ENCODE measurements at regions of chr7 and their contacts with region 1.

Region 1: DNA sequence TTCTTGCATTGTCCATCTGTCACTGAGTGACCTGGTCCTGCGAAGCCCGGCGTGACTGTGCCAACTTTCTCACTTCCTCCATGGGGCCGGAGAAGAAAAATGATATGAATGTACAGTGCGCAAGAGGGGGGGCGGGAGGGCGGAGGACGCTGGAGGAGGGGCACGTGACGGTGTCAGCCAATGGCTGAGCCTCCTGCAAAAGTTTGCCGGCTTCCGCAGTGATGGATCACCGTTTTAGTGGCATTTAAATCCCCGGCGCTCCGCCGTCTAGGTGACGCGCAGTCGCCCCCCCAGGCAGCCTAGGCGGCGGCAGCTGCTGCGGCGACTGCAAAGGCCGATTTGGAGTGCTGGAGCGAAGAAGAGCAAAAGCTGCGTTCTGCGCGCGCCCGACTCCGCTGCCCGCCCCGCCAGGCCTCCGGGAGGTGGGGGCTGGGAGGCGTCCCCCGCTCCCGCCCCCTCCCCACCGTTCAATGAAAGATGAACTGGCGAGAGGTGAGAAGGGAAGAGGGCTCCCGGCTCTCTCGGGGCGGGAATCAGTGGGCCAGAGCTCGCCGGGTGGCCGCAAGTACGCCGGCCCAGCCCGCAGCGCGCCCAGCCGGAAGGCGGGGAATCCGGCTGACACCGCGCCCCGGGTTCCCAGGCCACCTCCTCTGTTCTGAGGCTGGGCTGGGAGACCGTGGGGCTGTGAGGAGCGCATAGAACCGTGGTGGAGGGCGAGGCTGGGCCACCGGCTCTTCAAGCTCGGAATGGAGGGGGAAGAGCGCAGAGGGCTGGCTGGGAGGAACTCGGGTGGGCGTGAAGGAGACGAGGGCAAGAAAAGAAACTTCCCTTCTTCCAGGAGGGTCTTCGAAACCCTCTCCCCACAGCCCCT is at the start of gene HOXA1:
- DNase-seq: peak; percentile 67
- ATAC-seq: peak; percentile 87
- H3K4me3 Mint-ChIP-seq: peak within 1 kb of the TSS; percentile 94
- H3K27ac Mint-ChIP-seq: peak within 1 kb of the TSS; percentile 76
- H3K4me1 Mint-ChIP-seq: peaks cover 33% of the 10 kb centered on the region
- H3K27me3 Mint-ChIP-seq: peaks cover 52% of the 10 kb centered on the region
- CTCF ChIP-seq: no peak
- total RNA-seq, gene HOXA1: 0.55 and 0.61 TPM in 2 replicates

Region 2: GRCh38 chr7:25851332-25852210 is 1244.6 kb before region 1 on chr7:
- CTCF ChIA-PET with region 1: no interaction called
- POLR2A ChIA-PET with region 1: no interaction called
- intact Hi-C with region 1: loop called (anchors 5 kb)
- DNase-seq: no peak
- ATAC-seq: peak; percentile 64
- H3K4me3 Mint-ChIP-seq: peak overlapping the region; percentile 70
- H3K27ac Mint-ChIP-seq: peak overlapping the region; percentile 76
- H3K4me1 Mint-ChIP-seq: peaks cover 12% of the 10 kb centered on the region
- H3K27me3 Mint-ChIP-seq: peaks cover 50% of the 10 kb centered on the region
- CTCF ChIP-seq: no peak

Region 3: GRCh38 chr7:26376175-26376917 is 719.8 kb before region 1 on chr7:
- CTCF ChIA-PET with region 1: no interaction called
- POLR2A ChIA-PET with region 1: no interaction called
- intact Hi-C with region 1: loop called (anchors 5 kb)
- DNase-seq: peak; percentile 47
- ATAC-seq: peak; percentile 46
- H3K4me3 Mint-ChIP-seq: peak overlapping the region; percentile 83
- H3K27ac Mint-ChIP-seq: no peak overlapping the region
- H3K4me1 Mint-ChIP-seq: peaks cover 4% of the 10 kb centered on the region
- H3K27me3 Mint-ChIP-seq: peaks cover 2% of the 10 kb centered on the region
- CTCF ChIP-seq: no peak

Region 4: GRCh38 chr7:26686448-26686981 is 409.6 kb before region 1 on chr7:
- CTCF ChIA-PET with region 1: no interaction called
- POLR2A ChIA-PET with region 1: no interaction called
- intact Hi-C with region 1: loop called (anchors 2 kb)
- DNase-seq: no peak
- ATAC-seq: no peak
- H3K4me3 Mint-ChIP-seq: no peak overlapping the region
- H3K27ac Mint-ChIP-seq: no peak overlapping the region
- H3K4me1 Mint-ChIP-seq: peaks cover 28% of the 10 kb centered on the region
- H3K27me3 Mint-ChIP-seq: no peaks in the 10 kb centered on the region
- CTCF ChIP-seq: peak; percentile 61

Region 5: GRCh38 chr7:27031289-27032172 is 64.6 kb before region 1 on chr7:
- CTCF ChIA-PET with region 1: no interaction called
- POLR2A ChIA-PET with region 1: no interaction called
- intact Hi-C with region 1: loop called (anchors 2 kb)
- DNase-seq: no peak
- ATAC-seq: peak; percentile 50
- H3K4me3 Mint-ChIP-seq: no peak overlapping the region
- H3K27ac Mint-ChIP-seq: peak overlapping the region; percentile 47
- H3K4me1 Mint-ChIP-seq: peaks cover 17% of the 10 kb centered on the region
- H3K27me3 Mint-ChIP-seq: no peaks in the 10 kb centered on the region
- CTCF ChIP-seq: no peak

Region 6: DNA sequence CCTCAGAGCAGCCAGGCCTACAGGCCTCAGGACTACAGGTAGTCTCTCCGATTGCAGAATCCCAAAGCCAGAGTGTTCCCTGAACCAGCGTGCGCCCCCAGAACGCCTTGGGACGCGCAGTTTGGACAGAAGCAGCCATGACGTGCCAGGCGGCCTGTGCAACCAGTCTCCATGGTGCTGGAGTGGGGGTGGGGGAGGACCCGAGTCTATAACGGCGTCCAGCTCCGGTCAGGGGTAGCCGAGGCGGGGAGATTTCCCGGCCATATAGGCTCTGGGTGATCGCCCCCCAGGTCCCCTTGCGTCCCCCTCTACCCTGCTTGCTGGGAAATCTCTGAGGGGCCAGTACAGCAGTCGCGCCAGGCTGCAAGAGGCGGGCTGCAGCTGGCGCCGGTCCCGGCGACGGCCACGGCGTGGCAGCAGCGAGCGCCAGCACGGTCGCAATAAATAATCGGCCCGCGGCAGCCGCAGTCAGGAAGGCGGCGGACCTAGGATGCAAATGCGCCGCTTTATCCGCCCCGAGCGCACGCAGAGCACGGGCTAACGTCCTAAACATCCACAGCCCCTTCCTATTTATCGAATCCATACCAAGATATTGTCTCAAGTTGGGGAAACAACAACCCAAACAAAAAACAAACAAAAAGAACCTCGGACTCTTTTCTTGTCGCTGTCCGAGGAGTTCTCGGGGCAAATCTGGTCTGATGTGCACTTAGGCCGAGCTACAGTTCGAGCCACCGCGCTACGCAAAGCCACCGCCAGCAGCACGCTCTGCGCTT is 54.6 kb after region 1 on chr7:
- CTCF ChIA-PET with region 1: interaction called, 5 read pairs
- POLR2A ChIA-PET with region 1: no interaction called
- intact Hi-C with region 1: loop called (anchors 2 kb)
- DNase-seq: peak; percentile 69
- ATAC-seq: peak; percentile 91
- H3K4me3 Mint-ChIP-seq: peak overlapping the region; percentile 80
- H3K27ac Mint-ChIP-seq: peak overlapping the region; percentile 12
- H3K4me1 Mint-ChIP-seq: peaks cover 48% of the 10 kb centered on the region
- H3K27me3 Mint-ChIP-seq: peaks cover 76% of the 10 kb centered on the region
- CTCF ChIP-seq: peak; percentile 71

Region 7: DNA sequence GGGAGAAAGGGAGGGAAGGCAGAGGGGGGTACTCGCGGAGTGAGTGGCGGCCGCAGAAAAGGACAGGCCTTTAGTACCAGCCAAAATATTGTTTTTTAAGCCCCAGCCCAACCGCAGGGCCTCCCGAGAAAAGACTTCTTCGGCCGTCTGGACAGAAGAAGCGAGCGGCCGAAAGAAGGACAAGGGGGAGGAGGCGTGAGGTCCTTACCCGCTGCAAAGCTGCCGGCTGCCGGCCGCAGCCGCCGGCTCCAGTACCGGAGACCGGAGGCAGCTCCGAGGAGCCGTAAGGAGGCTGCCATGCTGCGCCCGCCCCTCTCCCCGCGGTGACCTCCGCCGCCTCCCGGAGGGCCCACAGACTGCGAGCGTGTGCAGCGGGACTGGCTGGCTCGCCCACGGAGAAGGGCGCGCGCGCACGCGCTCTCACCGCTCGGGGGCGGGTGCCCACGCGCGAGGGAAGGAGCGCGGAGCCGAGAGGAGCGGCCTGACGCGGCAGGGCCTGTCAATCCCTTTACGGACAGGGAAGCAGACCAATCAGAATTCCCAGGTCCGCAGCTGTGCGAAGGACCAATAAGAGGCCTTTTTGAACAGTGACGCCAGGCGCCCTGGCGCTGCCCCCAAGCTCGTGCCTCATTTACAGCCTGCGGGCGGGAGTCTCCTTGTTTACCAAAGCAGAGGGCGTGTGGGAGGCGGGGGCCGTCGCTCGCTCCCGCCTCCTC is 566.5 kb after region 1 on chr7 and contains the start of gene HIBADH:
- CTCF ChIA-PET with region 1: no interaction called
- POLR2A ChIA-PET with region 1: no interaction called
- intact Hi-C with region 1: loop called (anchors 5 kb)
- DNase-seq: peak; percentile 92
- ATAC-seq: peak; percentile 97
- H3K4me3 Mint-ChIP-seq: peak within 1 kb of the TSS; percentile 85
- H3K27ac Mint-ChIP-seq: peak within 1 kb of the TSS; percentile 81
- H3K4me1 Mint-ChIP-seq: peaks cover 14% of the 10 kb centered on the region
- H3K27me3 Mint-ChIP-seq: no peaks in the 10 kb centered on the region
- CTCF ChIP-seq: no peak
- total RNA-seq, gene HIBADH: 9.8 and 10.0 TPM in 2 replicates

Measured in activated B cell treated with CpG ODN at 0.5 μM for 24 hours (primary cell).